ENCODE measurements at regions of chr6 and their contacts with region 1.

Region 1: DNA sequence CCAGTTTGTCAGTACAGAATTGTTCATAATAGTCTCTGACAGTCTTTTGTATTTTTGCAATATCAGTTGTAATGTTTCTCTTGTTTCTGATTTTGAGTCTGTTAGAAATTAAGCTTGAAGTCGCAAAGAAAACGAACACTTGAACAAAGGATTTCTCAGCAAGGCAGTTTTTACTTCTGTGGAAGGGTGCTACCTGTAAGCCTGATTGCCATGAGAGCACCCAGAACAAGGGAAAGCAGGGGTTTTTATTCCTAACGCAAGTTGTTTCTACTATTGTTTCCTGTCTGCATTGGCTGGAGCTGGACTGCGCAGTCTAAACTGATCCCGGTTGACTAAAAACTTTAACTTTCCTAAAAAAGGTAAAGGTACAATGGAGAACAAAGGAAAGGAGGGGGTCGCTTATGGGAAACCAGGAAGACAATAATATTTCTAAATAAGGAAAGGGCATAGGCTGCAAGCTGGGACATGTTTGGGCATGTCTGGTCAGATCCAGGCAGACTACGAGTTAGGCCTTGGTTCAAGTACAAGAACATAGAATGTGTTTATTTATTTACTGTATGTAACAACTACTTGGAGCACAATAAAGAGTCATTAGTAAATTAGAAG is 28.5 kb downstream of the HLA-B start:
- DNase-seq: no peak
- H3K4me3 ChIP-seq: no peak overlapping the region
- H3K27ac ChIP-seq: no peak overlapping the region
- H3K4me1 ChIP-seq: no peaks in the 10 kb centered on the region
- H3K27me3 ChIP-seq: peaks cover 26% of the 10 kb centered on the region
- CTCF ChIP-seq: no peak

Region 2: GRCh38 chr6:31308050-31308844 is 20.2 kb before region 1 on chr6:
- CTCF ChIA-PET with region 1: no interaction called
- POLR2A ChIA-PET with region 1: interaction called, 11 read pairs
- intact Hi-C with region 1: no loop called
- DNase-seq: peak; percentile 26
- H3K4me3 ChIP-seq: peak overlapping the region; percentile 11
- H3K27ac ChIP-seq: no peak overlapping the region
- H3K4me1 ChIP-seq: no peaks in the 10 kb centered on the region
- H3K27me3 ChIP-seq: peaks cover 60% of the 10 kb centered on the region
- CTCF ChIP-seq: no peak

Measured in A673 (cell line).